Gastrocnemius medialis (tissue), 4 donors: ENCODE measurements at regions of chr1 and their contacts with region 1.

Region 1: GRCh38 chr1:221174330-221174999 is 295.2 kb downstream of the HLX start:
- DNase-seq: peak; percentile 20 to 46
- ATAC-seq: peak; percentile 71 to 77
- H3K4me3 ChIP-seq: no peak overlapping the region
- H3K27ac ChIP-seq: no peak overlapping the region
- H3K4me1 ChIP-seq: peaks cover 0 to 4% of the 10 kb centered on the region in 2 donors
- H3K27me3 ChIP-seq: no peaks in the 10 kb centered on the region
- CTCF ChIP-seq: peak in 4 of 5 experiments; percentile 19 to 39 (median 31)
- POLR2A ChIP-seq: no peak

Region 2: GRCh38 chr1:220873868-220874655 is 300.4 kb before region 1 on chr1:
- in situ Hi-C with region 1: no loop called
- intact Hi-C with region 1: loop called (anchors 1 kb)
- DNase-seq: no peak
- ATAC-seq: peak; percentile 21 to 32
- H3K4me3 ChIP-seq: no peak overlapping the region
- H3K27ac ChIP-seq: peak overlapping the region in 1 of 4 donors; percentile 5
- H3K4me1 ChIP-seq: peaks cover 8 to 17% of the 10 kb centered on the region in 2 donors
- H3K27me3 ChIP-seq: no peaks in the 10 kb centered on the region
- CTCF ChIP-seq: peak; percentile 54 to 75 (median 70)
- POLR2A ChIP-seq: no peak